HEK293T (cell line): ENCODE measurements at regions of chr1 and their contacts with region 1.

Region 1: DNA sequence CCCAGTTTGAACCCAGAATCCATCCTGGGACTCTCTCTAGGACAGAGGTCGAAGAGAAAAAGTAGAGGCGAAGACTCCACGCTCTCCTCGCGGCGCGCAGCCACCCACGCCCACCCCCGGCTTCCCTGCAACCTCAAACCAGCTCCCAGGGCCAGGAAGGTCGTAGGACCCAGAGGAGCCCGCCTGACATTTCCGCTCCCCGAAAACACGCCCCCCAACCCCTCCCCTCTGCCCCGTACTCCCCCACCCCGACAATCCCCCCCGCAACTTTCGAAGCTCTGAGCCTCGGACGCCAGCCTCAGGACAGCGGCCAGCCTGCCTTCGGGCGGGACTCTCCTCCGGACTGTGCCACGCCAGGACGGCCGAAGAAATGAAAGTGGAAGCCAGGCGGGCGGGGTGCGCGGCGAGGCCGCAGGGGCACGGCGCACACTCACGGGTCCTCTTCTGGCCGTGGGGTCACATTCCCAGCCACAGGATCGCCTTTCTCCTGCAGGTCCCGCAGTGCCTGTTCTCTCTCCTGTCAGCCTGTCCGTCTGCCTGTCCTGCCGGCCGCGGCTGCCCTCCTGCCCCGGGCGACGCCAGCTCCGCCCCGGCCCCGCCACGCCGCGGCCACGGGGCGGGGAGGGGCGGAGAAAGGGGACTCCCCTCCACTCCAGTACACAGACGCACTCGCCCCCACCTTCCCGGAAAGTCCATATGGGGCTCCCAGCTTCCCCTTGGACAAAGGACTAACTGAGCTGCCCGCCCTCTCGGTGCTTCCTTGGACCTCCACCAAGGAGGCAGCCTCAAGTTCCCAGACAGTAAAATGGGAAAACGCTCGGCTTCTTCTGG is at the start of gene MOB3C:
- DNase-seq: peak; percentile 33

Region 2: GRCh38 chr1:46581681-46582455 is 34.6 kb before region 1 on chr1:
- CTCF ChIA-PET with region 1: interaction called, 10 read pairs
- POLR2A ChIA-PET with region 1: no interaction called
- DNase-seq: no peak